ENCODE measurements at regions of chr2 and their contacts with region 1.

Region 1: GRCh38 chr2:231925303-231926179 is 655 bp downstream of the NPPC start:
- DNase-seq: peak; percentile 83
- H3K4me3 ChIP-seq: peak overlapping the region; percentile 37
- H3K27ac ChIP-seq: no peak overlapping the region
- H3K4me1 ChIP-seq: peaks cover 9% of the 10 kb centered on the region
- H3K27me3 ChIP-seq: peaks cover 41% of the 10 kb centered on the region
- CTCF ChIP-seq: peak; percentile 92

Region 2: GRCh38 chr2:230582851-230583283 is 1342.7 kb before region 1 on chr2:
- intact Hi-C with region 1: no loop called
- DNase-seq: no peak
- H3K4me3 ChIP-seq: no peak overlapping the region
- H3K27ac ChIP-seq: no peak overlapping the region
- H3K4me1 ChIP-seq: no peaks in the 10 kb centered on the region
- H3K27me3 ChIP-seq: no peaks in the 10 kb centered on the region
- CTCF ChIP-seq: no peak

Region 3: DNA sequence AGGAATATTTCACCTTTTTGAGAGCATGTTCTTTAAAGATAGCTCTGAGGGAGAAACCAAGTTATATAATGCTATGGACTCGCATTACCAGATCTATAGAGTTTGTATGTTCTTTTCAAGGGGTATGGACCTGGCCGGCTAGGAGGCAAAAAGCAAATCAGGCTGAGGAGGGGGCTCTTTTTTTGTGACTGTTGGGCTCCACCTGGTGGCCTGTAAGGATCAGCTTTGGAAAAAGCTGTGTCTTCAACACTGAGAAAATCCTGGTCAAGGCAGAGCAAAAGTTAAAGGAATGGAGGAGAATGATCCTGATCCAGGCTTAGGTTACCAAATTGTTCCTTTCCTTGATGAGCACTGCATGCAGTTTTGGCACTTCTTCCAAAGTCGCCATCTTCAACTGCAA is 216.5 kb after region 1 on chr2:
- intact Hi-C with region 1: loop called (anchors 5 kb)
- DNase-seq: no peak
- H3K4me3 ChIP-seq: no peak overlapping the region
- H3K27ac ChIP-seq: no peak overlapping the region
- H3K4me1 ChIP-seq: no peaks in the 10 kb centered on the region
- H3K27me3 ChIP-seq: no peaks in the 10 kb centered on the region
- CTCF ChIP-seq: peak; percentile 29

Region 4: GRCh38 chr2:232327105-232328041 is 401.8 kb after region 1 on chr2:
- intact Hi-C with region 1: loop called (anchors 5 kb)
- DNase-seq: peak; percentile 84
- H3K4me3 ChIP-seq: no peak overlapping the region
- H3K27ac ChIP-seq: no peak overlapping the region
- H3K4me1 ChIP-seq: no peaks in the 10 kb centered on the region
- H3K27me3 ChIP-seq: no peaks in the 10 kb centered on the region
- CTCF ChIP-seq: peak; percentile 82

Measured in colonic mucosa (tissue), 4 donors.